CD4-positive, alpha-beta memory T cell (primary cell): ENCODE measurements at regions of chr3 and their contacts with region 1.

Region 1: DNA sequence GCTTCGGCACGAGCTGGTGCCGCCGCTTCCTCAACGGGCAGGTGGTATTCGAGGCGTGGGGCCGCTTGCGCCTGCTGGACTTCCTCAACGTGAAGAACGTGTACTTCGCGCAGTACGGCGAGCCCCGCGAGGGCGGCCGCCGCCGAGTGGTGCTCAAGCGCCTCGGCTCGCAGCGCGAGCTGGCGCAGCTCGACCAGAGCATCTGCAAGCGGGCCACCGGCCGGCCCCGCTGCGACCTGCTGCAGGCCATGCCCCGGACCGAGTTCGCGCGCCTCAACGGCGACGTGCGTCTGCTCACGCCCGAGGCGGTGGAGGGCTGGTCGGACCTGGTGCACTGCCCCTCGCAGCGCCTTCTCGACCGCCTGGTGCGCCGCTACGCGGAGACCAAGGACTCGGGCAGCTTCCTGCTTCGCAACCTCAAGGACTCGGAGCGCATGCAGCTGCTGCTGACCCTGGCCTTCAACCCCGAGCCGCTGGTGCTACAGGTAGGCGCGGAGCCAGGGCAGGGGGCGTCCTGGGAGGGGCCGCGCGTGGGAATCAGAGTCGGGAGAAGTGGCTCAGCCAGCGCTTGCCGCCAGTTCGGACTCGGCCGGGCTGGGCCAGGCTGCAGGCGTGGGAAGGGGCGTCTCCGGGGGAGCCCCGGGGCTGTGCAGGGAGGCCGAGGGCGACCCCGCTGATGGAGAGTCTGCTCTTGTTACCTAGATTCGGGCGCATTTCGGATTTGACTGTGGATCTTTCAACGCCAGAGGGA is 1.1 kb downstream of the DIPK2A start:
- DNase-seq: peak in 4 of 5 donors; percentile 40 to 77 (median 57)
- H3K4me3 ChIP-seq: peak overlapping the region; percentile 45 to 99
- H3K4me3 Mint-ChIP-seq: peak overlapping the region; percentile 96 to 100 (median 98)
- H3K27ac ChIP-seq: peak overlapping the region; percentile 64
- H3K27ac Mint-ChIP-seq: peak overlapping the region; percentile 92 to 100 (median 94)
- H3K4me1 ChIP-seq: peaks cover 51% of the 10 kb centered on the region
- H3K4me1 Mint-ChIP-seq: peaks cover 25 to 59% (median 32%) of the 10 kb centered on the region in 4 donors
- H3K27me3 ChIP-seq: no peaks in the 10 kb centered on the region
- H3K27me3 Mint-ChIP-seq: no peaks in the 10 kb centered on the region

Region 2: GRCh38 chr3:142578327-142579223 is 1394.1 kb before region 1 on chr3 and contains the start of gene ATR:
- CTCF ChIA-PET with region 1: no interaction called
- POLR2A ChIA-PET with region 1: interaction called, 4 read pairs
- intact Hi-C with region 1: loop called (anchors 5 kb)
- DNase-seq: peak; percentile 95 to 96 (median 96)
- H3K4me3 ChIP-seq: peak within 1 kb of the TSS; percentile 90 to 100
- H3K4me3 Mint-ChIP-seq: peak within 1 kb of the TSS; percentile 93 to 99 (median 98)
- H3K27ac ChIP-seq: peak within 1 kb of the TSS; percentile 94
- H3K27ac Mint-ChIP-seq: peak within 1 kb of the TSS; percentile 91 to 99 (median 99)
- H3K4me1 ChIP-seq: peaks cover 44% of the 10 kb centered on the region
- H3K4me1 Mint-ChIP-seq: peaks cover 41 to 66% (median 52%) of the 10 kb centered on the region in 4 donors
- H3K27me3 ChIP-seq: no peaks in the 10 kb centered on the region
- H3K27me3 Mint-ChIP-seq: peaks cover 2 to 4% of the 10 kb centered on the region in 2 donors
- total RNA-seq, gene ATR: 42.3 to 45.6 TPM

Region 3: DNA sequence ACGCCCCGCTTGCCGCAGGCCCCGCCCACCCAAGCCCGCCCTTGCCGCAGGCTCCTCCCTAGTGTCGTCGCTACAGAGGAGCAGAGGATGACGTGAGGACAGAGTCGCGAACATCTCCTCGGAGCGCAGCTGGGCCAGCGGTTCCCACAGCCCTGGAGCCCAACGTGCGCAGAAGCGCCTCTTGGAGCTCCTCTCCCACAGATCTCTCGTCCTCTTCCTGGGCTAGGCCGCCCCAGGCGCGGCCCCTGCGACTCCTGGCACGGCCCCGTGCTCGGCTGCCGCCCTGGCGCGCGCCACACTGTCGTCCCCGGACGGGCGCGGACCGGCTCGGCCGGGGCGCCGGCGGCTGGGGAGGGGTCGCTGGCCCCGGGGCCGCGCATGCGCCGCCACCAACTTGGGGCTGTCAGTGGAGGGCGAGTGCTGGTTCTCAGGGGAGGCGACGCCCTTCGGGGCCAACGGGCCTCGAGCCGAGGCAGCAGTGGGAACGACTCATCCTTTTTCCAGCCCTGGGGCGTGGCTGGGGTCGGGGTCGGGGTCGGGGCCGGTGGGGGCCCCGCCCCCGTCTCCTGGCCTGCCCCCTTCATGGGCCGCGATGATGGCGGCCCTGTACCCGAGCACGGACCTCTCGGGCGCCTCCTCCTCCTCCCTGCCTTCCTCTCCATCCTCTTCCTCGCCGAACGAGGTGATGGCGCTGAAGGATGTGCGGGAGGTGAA is 1248.6 kb before region 1 on chr3 and contains the start of gene TRPC1:
- CTCF ChIA-PET with region 1: no interaction called
- POLR2A ChIA-PET with region 1: interaction called, 7 read pairs
- intact Hi-C with region 1: loop called (anchors 5 kb)
- DNase-seq: peak; percentile 80 to 87 (median 84)
- H3K4me3 ChIP-seq: peak within 1 kb of the TSS; percentile 58 to 65
- H3K4me3 Mint-ChIP-seq: peak within 1 kb of the TSS; percentile 88 to 91 (median 90)
- H3K27ac ChIP-seq: peak within 1 kb of the TSS; percentile 55
- H3K27ac Mint-ChIP-seq: peak within 1 kb of the TSS; percentile 74 to 96 (median 95)
- H3K4me1 ChIP-seq: peaks cover 12% of the 10 kb centered on the region
- H3K4me1 Mint-ChIP-seq: peaks cover 8 to 15% (median 15%) of the 10 kb centered on the region in 4 donors
- H3K27me3 ChIP-seq: no peaks in the 10 kb centered on the region
- H3K27me3 Mint-ChIP-seq: peaks cover 8 to 15% of the 10 kb centered on the region in 2 donors
- total RNA-seq, gene TRPC1: 6.0 to 8.8 TPM

Region 4: GRCh38 chr3:143119009-143119914 is 853.4 kb before region 1 on chr3 and contains the start of gene CHST2:
- CTCF ChIA-PET with region 1: no interaction called
- POLR2A ChIA-PET with region 1: no interaction called
- intact Hi-C with region 1: loop called (anchors 5 kb)
- DNase-seq: peak in 4 of 5 donors; percentile 53 to 69 (median 62)
- H3K4me3 ChIP-seq: peak within 1 kb of the TSS; percentile 68 to 76
- H3K4me3 Mint-ChIP-seq: peak within 1 kb of the TSS; percentile 85 to 94 (median 90)
- H3K27ac ChIP-seq: peak within 1 kb of the TSS; percentile 26
- H3K27ac Mint-ChIP-seq: peak within 1 kb of the TSS; percentile 42 to 77 (median 61)
- H3K4me1 ChIP-seq: peaks cover 19% of the 10 kb centered on the region
- H3K4me1 Mint-ChIP-seq: peaks cover 18 to 36% (median 22%) of the 10 kb centered on the region in 4 donors
- H3K27me3 ChIP-seq: no peaks in the 10 kb centered on the region
- H3K27me3 Mint-ChIP-seq: peaks cover 0 to 10% of the 10 kb centered on the region in 2 donors
- total RNA-seq, gene CHST2: 1.1 TPM

Region 5: DNA sequence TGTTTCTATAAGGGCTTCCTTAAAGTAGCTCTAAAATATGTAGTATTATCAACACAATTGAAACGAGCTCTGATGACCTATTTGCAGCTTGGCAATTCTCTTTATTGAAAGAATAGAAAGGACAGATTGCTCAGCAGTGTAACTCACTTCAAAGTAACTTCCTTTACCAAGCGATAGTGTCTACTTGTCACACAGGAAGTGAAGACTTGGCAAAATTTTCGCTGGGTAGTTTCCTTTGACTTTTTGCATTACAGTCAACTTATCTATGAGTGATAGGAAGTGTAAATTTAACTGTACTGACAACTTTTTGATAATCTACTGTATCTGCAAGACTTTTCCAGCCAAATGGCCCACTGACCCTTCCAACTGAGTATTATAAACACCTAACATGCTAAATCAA is 147.2 kb before region 1 on chr3:
- CTCF ChIA-PET with region 1: interaction called, 5 read pairs
- POLR2A ChIA-PET with region 1: interaction called, 25 read pairs
- intact Hi-C with region 1: no loop called
- DNase-seq: peak; percentile 35 to 61 (median 46)
- H3K4me3 ChIP-seq: no peak overlapping the region
- H3K4me3 Mint-ChIP-seq: peak overlapping the region in 7 of 8 donors; percentile 26 to 75 (median 56)
- H3K27ac ChIP-seq: no peak overlapping the region
- H3K27ac Mint-ChIP-seq: peak overlapping the region; percentile 70 to 93 (median 84)
- H3K4me1 ChIP-seq: peaks cover 38% of the 10 kb centered on the region
- H3K4me1 Mint-ChIP-seq: peaks cover 39 to 59% (median 45%) of the 10 kb centered on the region in 4 donors
- H3K27me3 ChIP-seq: no peaks in the 10 kb centered on the region
- H3K27me3 Mint-ChIP-seq: no peaks in the 10 kb centered on the region

Region 6: DNA sequence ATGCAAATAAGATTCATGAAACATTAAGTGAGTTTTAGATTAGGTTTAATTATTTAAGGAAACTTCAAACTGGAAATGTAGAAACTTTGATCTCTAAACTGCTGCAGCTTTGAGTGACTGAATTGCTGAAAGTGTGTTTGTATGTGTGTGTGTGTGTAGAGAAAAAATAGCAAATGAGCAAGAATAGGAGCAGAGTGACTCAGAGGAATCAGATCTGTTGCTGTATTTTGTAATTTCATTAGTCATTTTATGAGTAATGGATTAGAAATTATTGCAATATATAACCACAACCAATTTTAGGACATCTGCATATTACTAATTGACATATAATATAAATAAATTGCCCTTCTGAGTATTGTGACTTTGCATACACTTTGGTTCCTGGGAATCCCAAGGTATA is 71.6 kb before region 1 on chr3:
- CTCF ChIA-PET with region 1: no interaction called
- POLR2A ChIA-PET with region 1: no interaction called
- intact Hi-C with region 1: no loop called
- DNase-seq: no peak
- H3K4me3 ChIP-seq: no peak overlapping the region
- H3K4me3 Mint-ChIP-seq: no peak overlapping the region
- H3K27ac ChIP-seq: no peak overlapping the region
- H3K27ac Mint-ChIP-seq: no peak overlapping the region
- H3K4me1 ChIP-seq: no peaks in the 10 kb centered on the region
- H3K4me1 Mint-ChIP-seq: no peaks in the 10 kb centered on the region
- H3K27me3 ChIP-seq: no peaks in the 10 kb centered on the region
- H3K27me3 Mint-ChIP-seq: peaks cover 3 to 8% of the 10 kb centered on the region in 2 donors

Region 7: DNA sequence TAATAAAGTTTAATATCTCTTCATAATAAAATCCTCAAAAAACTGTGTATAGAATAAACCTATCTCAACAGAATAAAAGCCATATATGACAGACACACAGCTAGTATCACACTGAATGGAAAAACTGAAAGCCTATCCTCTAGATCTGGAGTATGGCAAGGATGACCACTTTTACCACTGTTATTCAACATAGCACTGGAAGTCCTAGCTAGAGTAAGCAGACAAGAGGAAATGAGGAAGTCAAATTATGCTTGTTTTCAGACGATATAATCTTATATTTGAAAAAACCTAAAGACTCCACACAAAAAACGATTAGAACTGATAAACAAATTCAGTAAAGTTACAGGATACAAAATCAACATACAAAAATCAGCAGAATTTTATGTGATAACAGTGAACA is 58.4 kb before region 1 on chr3:
- CTCF ChIA-PET with region 1: no interaction called
- POLR2A ChIA-PET with region 1: no interaction called
- intact Hi-C with region 1: no loop called
- DNase-seq: no peak
- H3K4me3 ChIP-seq: no peak overlapping the region
- H3K4me3 Mint-ChIP-seq: no peak overlapping the region
- H3K27ac ChIP-seq: no peak overlapping the region
- H3K27ac Mint-ChIP-seq: no peak overlapping the region
- H3K4me1 ChIP-seq: no peaks in the 10 kb centered on the region
- H3K4me1 Mint-ChIP-seq: no peaks in the 10 kb centered on the region
- H3K27me3 ChIP-seq: no peaks in the 10 kb centered on the region
- H3K27me3 Mint-ChIP-seq: peaks cover 7 to 23% of the 10 kb centered on the region in 2 donors

Region 8: GRCh38 chr3:143951351-143951971 is 21.2 kb before region 1 on chr3:
- CTCF ChIA-PET with region 1: interaction called, 10 read pairs
- POLR2A ChIA-PET with region 1: interaction called, 5 read pairs
- intact Hi-C with region 1: loop called (anchors 1 kb)
- DNase-seq: peak in 4 of 5 donors; percentile 29 to 41 (median 32)
- H3K4me3 ChIP-seq: no peak overlapping the region
- H3K4me3 Mint-ChIP-seq: no peak overlapping the region
- H3K27ac ChIP-seq: no peak overlapping the region
- H3K27ac Mint-ChIP-seq: no peak overlapping the region
- H3K4me1 ChIP-seq: no peaks in the 10 kb centered on the region
- H3K4me1 Mint-ChIP-seq: peaks cover 0 to 2% (median 0%) of the 10 kb centered on the region in 4 donors
- H3K27me3 ChIP-seq: no peaks in the 10 kb centered on the region
- H3K27me3 Mint-ChIP-seq: peaks cover 1 to 2% of the 10 kb centered on the region in 2 donors